GM12878 (cell line): ENCODE measurements at regions of chr11 and their contacts with region 1.

Region 1: GRCh38 chr11:46352063-46352841 is 5.0 kb downstream of the DGKZ start:
- DNase-seq: no peak
- ATAC-seq: peak; percentile 29
- H3K4me3 ChIP-seq: no peak overlapping the region
- H3K27ac ChIP-seq: no peak overlapping the region
- H3K4me1 ChIP-seq: peaks cover 30% of the 10 kb centered on the region
- H3K27me3 ChIP-seq: no peaks in the 10 kb centered on the region
- CTCF ChIP-seq: peak; percentile 86 to 97 (median 87)
- EP300 ChIP-seq: no peak
- POLR2A ChIP-seq: no peak
- RAD21 ChIP-seq: peak; percentile 50

Region 2: DNA sequence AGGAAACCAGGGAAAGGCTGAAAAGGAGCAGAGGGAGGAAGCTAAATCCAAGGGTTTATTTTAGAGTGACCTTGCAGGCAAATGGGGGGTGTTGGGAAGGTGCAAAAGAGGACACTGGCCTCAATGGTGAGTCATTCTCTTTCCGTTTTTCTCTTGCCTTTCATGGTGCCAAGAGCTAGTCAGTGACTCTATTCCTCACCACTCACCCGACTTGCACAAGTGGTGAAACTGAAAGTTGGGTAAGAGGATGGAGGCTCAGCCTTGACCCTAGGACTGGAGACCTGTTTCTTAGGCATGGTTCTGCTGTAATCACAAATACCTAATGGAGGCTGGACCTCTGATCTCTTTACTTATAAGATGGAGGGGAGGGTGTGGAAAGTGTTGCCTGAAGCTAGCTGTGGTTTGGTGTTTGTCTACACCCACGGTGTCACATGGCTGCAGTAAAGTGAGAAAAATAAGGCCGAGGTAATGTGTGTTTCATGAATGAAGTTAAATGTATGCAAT is 142.1 kb before region 1 on chr11:
- CTCF ChIA-PET with region 1: no interaction called
- POLR2A ChIA-PET with region 1: no interaction called
- RAD21 ChIA-PET with region 1: no interaction called
- SMC1A ChIA-PET with region 1: no interaction called
- in situ Hi-C with region 1: no loop called
- intact Hi-C with region 1: no loop called
- DNase-seq: peak; percentile 15
- ATAC-seq: peak; percentile 80
- H3K4me3 ChIP-seq: no peak overlapping the region
- H3K27ac ChIP-seq: no peak overlapping the region
- H3K4me1 ChIP-seq: peaks cover 6% of the 10 kb centered on the region; the same call in 1 of the 2 replicates
- H3K27me3 ChIP-seq: no peaks in the 10 kb centered on the region; a peak in 1 of 4 replicates
- CTCF ChIP-seq: no peak
- EP300 ChIP-seq: no peak
- POLR2A ChIP-seq: no peak
- RAD21 ChIP-seq: no peak

Region 3: GRCh38 chr11:46367244-46367915 is 15.1 kb after region 1 on chr11:
- CTCF ChIA-PET with region 1: interaction called, 423 read pairs
- POLR2A ChIA-PET with region 1: interaction called, 32 read pairs
- RAD21 ChIA-PET with region 1: interaction called, 38 read pairs
- SMC1A ChIA-PET with region 1: interaction called, 70 read pairs
- in situ Hi-C with region 1: no loop called
- intact Hi-C with region 1: loop called (anchors 1 kb)
- DNase-seq: no peak
- ATAC-seq: peak; percentile 92
- H3K4me3 ChIP-seq: no peak overlapping the region
- H3K27ac ChIP-seq: no peak overlapping the region
- H3K4me1 ChIP-seq: peaks cover 7% of the 10 kb centered on the region
- H3K27me3 ChIP-seq: no peaks in the 10 kb centered on the region
- CTCF ChIP-seq: peak; percentile 77 to 94 (median 80)
- EP300 ChIP-seq: no peak
- POLR2A ChIP-seq: no peak
- RAD21 ChIP-seq: peak; percentile 62